ENCODE measurements at regions of chr3 and their contacts with region 1.

Region 1: DNA sequence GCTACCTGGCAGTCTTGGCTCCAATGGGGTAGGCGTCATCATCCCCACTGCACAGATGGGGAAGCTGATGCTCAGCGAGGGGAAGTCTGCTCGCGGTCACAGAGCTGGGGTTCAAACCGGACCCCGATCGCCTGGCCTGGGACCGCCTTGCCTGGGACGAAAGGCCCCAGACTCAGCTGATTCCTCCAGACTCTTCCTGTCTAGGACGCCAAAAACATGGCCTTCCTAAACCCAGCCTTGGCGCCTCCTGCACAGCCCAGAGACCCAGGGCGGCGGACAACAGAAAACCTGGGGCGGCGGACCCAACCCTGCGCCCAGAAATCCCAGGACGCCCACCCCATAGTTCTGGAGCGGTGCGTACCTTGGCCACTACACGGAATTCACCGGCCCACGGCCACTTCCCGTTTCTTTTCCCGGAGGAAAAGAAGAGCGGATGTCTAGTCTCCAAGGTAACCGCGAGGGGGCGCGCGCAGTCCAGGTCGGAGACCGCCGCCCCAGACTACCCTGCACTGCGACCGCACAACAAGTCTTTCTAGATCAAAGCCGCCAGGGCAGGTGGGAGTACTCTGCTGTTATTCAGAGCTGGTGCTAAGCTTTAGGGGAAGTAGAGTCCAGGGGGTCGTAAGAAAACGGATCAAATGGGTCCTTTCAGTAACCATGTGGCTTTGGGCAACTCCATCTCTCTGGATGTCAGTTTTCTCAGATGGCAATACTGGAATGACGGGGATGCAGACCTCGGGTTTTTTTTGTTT is 4.9 kb upstream of the IL17RD start:
- DNase-seq: peak; percentile 76
- H3K4me3 ChIP-seq: peak overlapping the region; percentile 55
- H3K27ac ChIP-seq: no peak overlapping the region
- H3K4me1 ChIP-seq: peaks cover 17% of the 10 kb centered on the region
- CTCF ChIP-seq: peak; percentile 95

Region 2: DNA sequence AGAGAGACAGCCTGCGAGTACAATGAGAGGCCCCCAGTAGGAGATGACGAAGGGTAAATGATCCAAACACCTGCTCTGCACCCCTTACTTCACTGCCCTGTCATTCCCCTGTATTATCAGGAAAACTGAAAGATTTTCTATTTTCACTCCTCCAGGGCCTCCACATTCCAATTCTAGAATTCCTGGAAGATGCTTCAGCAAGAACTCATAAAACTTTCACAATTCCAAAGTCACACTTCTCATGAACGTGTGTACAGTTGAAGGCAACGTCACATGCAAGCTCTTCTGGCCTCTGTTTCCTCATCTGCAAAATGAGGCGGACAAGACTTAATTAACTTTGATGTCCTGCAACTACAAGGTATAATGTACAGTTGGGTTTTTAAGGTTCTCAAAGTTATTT is 172.4 kb before region 1 on chr3:
- CTCF ChIA-PET with region 1: interaction called, 3 read pairs
- POLR2A ChIA-PET with region 1: no interaction called
- intact Hi-C with region 1: loop called (anchors 5 kb)
- DNase-seq: no peak
- H3K4me3 ChIP-seq: no peak overlapping the region
- H3K27ac ChIP-seq: no peak overlapping the region
- H3K4me1 ChIP-seq: peaks cover 17% of the 10 kb centered on the region
- CTCF ChIP-seq: no peak

Region 3: DNA sequence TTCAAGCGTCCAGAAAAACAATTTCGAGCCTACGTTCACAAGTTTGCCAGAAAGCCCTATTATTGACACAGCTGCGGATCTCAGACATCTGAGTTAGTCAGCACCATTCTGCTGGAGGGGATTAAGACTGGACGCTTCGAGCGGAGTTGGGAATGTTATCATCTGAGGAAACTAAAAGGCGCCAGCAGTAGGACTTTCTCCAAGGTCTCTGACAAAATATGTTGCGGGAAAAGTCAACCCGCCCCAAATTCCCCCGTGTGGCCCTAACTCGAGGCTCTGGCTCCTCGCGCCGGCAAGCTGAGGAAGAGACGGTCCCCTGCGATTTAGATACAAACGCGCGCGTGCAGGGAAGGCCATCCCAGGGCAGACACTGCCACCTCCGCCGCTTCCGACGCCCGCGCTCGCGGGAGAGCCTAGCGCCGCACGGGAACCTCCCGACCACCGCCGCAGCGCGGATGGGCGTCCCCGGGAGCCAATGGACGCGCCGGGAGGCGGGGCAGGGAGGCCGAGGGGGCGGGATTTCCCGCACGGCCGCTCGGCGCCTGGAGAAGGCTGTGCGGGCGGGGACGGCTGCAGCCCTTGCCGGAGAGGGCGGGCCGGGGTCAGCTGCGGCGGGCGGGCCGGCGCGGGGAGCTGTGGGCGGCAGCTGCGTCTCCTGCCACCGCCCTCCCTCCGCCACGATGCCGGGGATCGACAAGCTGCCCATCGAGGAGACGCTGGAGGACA is 57.3 kb after region 1 on chr3 and contains the start of gene APPL1:
- CTCF ChIA-PET with region 1: no interaction called
- POLR2A ChIA-PET with region 1: interaction called, 3 read pairs
- intact Hi-C with region 1: loop called (anchors 1 kb)
- DNase-seq: peak; percentile 95
- H3K4me3 ChIP-seq: peak within 1 kb of the TSS; percentile 90
- H3K27ac ChIP-seq: peak within 1 kb of the TSS; percentile 44
- H3K4me1 ChIP-seq: peaks cover 36% of the 10 kb centered on the region
- CTCF ChIP-seq: no peak
- total RNA-seq, gene APPL1: 43.3 and 45.9 TPM in 2 replicates

Region 4: DNA sequence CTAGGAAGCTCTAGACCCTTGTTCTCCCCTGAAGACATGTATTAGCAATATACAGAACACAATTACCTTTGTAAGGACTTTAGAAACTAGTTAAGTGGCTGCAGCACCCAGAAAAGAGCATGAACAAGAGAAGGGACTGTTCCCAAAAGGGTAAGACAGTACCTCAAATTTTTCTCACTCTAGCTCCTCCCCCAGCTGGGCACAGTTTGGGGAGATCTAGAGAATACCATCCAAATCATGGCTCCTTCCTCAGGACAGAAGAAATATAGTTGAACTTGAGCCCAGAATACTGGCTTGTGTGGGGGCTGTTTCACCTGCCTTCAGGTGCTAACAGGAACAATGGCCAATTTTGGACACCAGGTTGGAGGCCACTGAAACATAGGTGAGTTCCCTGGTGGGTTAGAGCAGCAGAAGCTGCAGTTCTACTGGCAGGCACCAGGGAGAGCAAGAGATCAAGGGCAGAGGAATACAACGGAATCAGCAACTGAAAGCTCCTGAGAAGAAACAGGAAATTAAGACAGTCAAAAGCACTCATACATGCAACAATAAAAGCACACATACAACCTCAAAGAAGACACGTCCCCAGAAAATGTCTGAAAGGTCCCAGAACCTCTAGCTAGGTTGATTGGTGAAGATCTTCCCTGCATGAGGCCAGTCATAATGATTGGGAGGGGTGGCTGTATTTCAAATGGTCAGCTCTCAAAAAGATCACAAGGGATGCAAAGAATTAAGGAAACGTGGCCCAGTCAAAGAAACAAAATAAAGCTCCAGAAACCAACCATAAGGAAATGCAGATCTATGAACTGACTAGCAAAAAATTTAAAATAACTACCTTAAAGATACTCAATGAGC is 227.4 kb after region 1 on chr3:
- CTCF ChIA-PET with region 1: no interaction called
- POLR2A ChIA-PET with region 1: interaction called, 3 read pairs
- intact Hi-C with region 1: loop called (anchors 10 kb)
- DNase-seq: peak; percentile 84
- H3K4me3 ChIP-seq: peak overlapping the region; percentile 17
- H3K27ac ChIP-seq: no peak overlapping the region
- H3K4me1 ChIP-seq: peaks cover 5% of the 10 kb centered on the region
- CTCF ChIP-seq: peak; percentile 96

Region 5: GRCh38 chr3:57582474-57583168 is 412.6 kb after region 1 on chr3:
- CTCF ChIA-PET with region 1: no interaction called
- POLR2A ChIA-PET with region 1: no interaction called
- intact Hi-C with region 1: loop called (anchors 5 kb)
- DNase-seq: peak; percentile 72
- H3K4me3 ChIP-seq: no peak overlapping the region
- H3K27ac ChIP-seq: peak overlapping the region; percentile 27
- H3K4me1 ChIP-seq: peaks cover 13% of the 10 kb centered on the region
- CTCF ChIP-seq: peak; percentile 77

Region 6: DNA sequence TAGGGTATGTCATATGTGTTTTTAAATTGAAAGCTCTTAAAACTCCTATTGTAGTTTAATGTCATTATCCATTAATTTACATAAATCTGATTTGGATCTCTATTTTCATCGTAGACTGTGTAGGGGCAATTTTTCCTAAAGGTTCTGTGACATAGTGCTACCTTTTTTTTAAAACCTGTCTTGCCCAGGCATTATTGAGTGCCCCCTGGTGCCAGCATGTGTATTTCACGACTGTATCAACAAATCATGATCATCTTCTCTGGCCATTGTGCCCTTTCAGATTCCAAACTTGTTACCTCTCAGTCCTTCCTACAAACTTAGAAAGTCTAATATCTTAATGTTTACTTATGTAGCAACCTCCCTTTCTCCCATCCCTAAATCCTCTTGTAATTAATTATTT is 740.9 kb after region 1 on chr3:
- CTCF ChIA-PET with region 1: no interaction called
- POLR2A ChIA-PET with region 1: no interaction called
- intact Hi-C with region 1: loop called (anchors 10 kb)
- DNase-seq: peak; percentile 42
- H3K4me3 ChIP-seq: no peak overlapping the region
- H3K27ac ChIP-seq: no peak overlapping the region
- H3K4me1 ChIP-seq: no peaks in the 10 kb centered on the region
- CTCF ChIP-seq: peak; percentile 81

Region 7: DNA sequence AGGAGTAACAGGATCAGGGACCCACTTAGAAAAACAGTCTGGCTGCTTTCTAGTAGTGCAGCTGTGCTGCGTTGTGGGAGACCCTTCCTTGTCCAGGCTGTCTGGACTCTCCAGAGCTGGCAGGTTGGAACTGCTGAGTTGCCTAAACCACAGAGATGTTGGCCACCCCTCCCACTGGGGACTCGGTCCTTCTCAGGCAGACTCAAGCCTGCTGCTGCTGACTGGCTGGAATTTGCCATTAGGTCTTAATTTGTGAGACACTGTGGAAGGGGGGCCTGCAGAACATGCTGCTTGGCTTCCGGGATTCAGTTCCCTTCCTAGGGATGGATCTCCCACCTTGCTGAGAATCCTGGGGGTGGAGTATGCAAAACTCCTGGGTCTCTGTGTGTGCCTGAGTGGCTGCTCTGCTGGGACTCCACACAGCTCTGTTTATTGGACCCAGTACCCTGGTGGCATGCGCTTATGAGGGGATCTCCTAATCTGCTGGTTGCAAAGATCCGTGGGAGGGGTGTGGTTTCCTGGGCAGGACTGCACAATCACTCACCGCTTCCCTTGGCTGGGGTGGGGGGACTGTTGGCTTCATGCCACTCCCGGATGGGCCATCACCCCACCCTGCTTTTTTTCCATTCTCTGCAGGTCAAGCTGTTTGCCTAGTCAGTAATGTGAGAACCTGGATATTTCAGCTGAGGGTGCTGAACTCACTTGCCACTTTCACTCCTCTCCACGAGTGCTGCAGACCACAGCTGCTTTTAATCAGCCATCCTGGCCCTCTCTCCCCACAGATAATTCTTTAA is 1729.3 kb after region 1 on chr3:
- CTCF ChIA-PET with region 1: no interaction called
- POLR2A ChIA-PET with region 1: no interaction called
- intact Hi-C with region 1: no loop called
- DNase-seq: no peak
- H3K4me3 ChIP-seq: no peak overlapping the region
- H3K27ac ChIP-seq: no peak overlapping the region
- H3K4me1 ChIP-seq: no peaks in the 10 kb centered on the region
- CTCF ChIP-seq: no peak

Measured in OCI-LY7 (cell line).